PC-9 (cell line): ENCODE measurements at regions of chr4 and their contacts with region 1.

Region 1: GRCh38 chr4:152937336-152938236 is 1.5 kb downstream of the FHDC1 start:
- DNase-seq: peak in 1 of 2 experiments; percentile 39
- H3K4me3 ChIP-seq: peak overlapping the region; percentile 80
- H3K27ac ChIP-seq: no peak overlapping the region
- H3K4me1 ChIP-seq: peaks cover 4% of the 10 kb centered on the region; the same call in 1 of the 2 replicates
- H3K27me3 ChIP-seq: no peaks in the 10 kb centered on the region
- CTCF ChIP-seq: no peak

Region 2: DNA sequence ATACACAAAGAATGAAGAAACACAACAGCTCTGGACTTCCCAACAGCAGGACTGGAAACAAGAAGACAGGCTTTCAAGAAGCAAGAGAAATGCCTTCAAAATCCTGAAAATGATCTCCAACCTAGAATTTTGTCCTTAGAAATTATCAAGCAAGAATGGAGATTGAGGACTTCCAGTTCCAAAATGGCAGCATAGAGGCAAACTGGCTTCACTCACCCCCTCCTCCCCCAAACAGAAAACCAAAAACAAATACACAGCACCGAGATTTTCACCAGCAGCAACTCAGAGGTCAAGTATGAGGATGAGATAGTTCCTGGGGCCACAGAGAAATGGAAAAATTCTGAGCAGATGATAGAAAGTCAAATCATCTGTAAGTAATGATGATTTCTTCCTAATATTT is 1882.0 kb before region 1 on chr4:
- CTCF ChIA-PET with region 1: no interaction called
- POLR2A ChIA-PET with region 1: interaction called, 23 read pairs
- intact Hi-C with region 1: no loop called
- DNase-seq: no peak
- H3K4me3 ChIP-seq: no peak overlapping the region
- H3K27ac ChIP-seq: no peak overlapping the region
- H3K4me1 ChIP-seq: no peaks in the 10 kb centered on the region
- H3K27me3 ChIP-seq: no peaks in the 10 kb centered on the region
- CTCF ChIP-seq: no peak

Region 3: DNA sequence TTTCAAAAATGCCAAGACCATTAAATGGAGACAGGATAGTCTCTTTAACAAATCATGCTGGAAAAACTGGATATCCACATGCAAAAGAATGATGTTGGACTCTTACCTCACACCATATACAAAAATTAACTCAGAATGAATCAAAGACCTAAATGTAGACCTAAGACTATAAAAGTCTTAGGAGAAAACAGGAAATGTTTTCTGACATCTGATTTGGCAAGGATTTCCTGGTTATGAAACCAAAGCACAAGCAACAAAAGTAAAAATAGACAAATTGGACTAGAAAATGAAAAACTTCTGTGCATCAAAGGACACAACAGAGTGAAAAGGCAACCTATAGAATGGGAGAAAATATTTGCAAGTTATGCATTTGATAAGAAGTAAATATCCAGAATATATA is 120.3 kb before region 1 on chr4:
- CTCF ChIA-PET with region 1: no interaction called
- POLR2A ChIA-PET with region 1: no interaction called
- intact Hi-C with region 1: no loop called
- DNase-seq: no peak
- H3K4me3 ChIP-seq: no peak overlapping the region
- H3K27ac ChIP-seq: no peak overlapping the region
- H3K4me1 ChIP-seq: no peaks in the 10 kb centered on the region
- H3K27me3 ChIP-seq: no peaks in the 10 kb centered on the region
- CTCF ChIP-seq: no peak

Region 4: DNA sequence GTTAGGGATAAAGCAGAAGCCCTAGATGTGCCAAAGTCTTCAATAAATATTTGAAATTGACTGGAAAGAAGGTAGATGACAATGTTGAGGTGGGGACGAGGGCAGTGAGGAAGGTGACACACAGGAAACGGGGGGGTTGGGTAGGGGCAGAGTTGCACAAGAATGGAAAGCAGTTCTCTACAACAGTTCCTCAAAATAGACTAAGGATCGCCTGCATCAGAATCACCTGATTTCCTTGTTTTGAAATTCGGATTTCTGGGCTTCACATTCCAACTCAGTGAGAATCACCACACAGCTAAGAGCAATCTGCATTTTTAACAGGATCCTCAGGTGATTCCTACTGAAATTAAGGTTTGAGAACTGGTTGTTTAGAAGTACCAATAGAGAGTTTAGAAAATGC is 87.2 kb before region 1 on chr4:
- CTCF ChIA-PET with region 1: interaction called, 3 read pairs
- POLR2A ChIA-PET with region 1: no interaction called
- intact Hi-C with region 1: loop called (anchors 2 kb)
- DNase-seq: peak; percentile 19 to 64
- H3K4me3 ChIP-seq: no peak overlapping the region
- H3K27ac ChIP-seq: peak overlapping the region; percentile 74
- H3K4me1 ChIP-seq: peaks cover 20% of the 10 kb centered on the region
- H3K27me3 ChIP-seq: no peaks in the 10 kb centered on the region
- CTCF ChIP-seq: no peak

Region 5: GRCh38 chr4:152983774-152984411 is 46.3 kb after region 1 on chr4:
- CTCF ChIA-PET with region 1: interaction called, 4 read pairs
- POLR2A ChIA-PET with region 1: interaction called, 4 read pairs
- intact Hi-C with region 1: loop called (anchors 2 kb)
- DNase-seq: peak; percentile 41 to 77
- H3K4me3 ChIP-seq: no peak overlapping the region
- H3K27ac ChIP-seq: peak overlapping the region; percentile 80
- H3K4me1 ChIP-seq: peaks cover 56% of the 10 kb centered on the region
- H3K27me3 ChIP-seq: no peaks in the 10 kb centered on the region
- CTCF ChIP-seq: no peak

Region 6: GRCh38 chr4:153083447-153083947 is 145.9 kb after region 1 on chr4:
- CTCF ChIA-PET with region 1: no interaction called
- POLR2A ChIA-PET with region 1: no interaction called
- intact Hi-C with region 1: loop called (anchors 1 kb)
- DNase-seq: peak; percentile 55 to 66
- H3K4me3 ChIP-seq: no peak overlapping the region
- H3K27ac ChIP-seq: peak overlapping the region; percentile 49; the same call in 1 of the 2 replicates
- H3K4me1 ChIP-seq: peaks cover 18% of the 10 kb centered on the region
- H3K27me3 ChIP-seq: no peaks in the 10 kb centered on the region
- CTCF ChIP-seq: peak; percentile 70